CD4-positive, alpha-beta T cell (primary cell): ENCODE measurements at regions of chr14 and their contacts with region 1.

Region 1: GRCh38 chr14:77108746-77109145 is 10.7 kb downstream of the CIPC start:
- DNase-seq: no peak
- ATAC-seq: no peak
- H3K4me3 ChIP-seq: no peak overlapping the region
- H3K4me3 Mint-ChIP-seq: no peak overlapping the region
- H3K27ac ChIP-seq: no peak overlapping the region
- H3K27ac Mint-ChIP-seq: no peak overlapping the region
- H3K4me1 ChIP-seq: no peaks in the 10 kb centered on the region
- H3K4me1 Mint-ChIP-seq: no peaks in the 10 kb centered on the region
- H3K27me3 ChIP-seq: no peaks in the 10 kb centered on the region
- H3K27me3 Mint-ChIP-seq: no peaks in the 10 kb centered on the region
- CTCF ChIP-seq: no peak

Region 2: DNA sequence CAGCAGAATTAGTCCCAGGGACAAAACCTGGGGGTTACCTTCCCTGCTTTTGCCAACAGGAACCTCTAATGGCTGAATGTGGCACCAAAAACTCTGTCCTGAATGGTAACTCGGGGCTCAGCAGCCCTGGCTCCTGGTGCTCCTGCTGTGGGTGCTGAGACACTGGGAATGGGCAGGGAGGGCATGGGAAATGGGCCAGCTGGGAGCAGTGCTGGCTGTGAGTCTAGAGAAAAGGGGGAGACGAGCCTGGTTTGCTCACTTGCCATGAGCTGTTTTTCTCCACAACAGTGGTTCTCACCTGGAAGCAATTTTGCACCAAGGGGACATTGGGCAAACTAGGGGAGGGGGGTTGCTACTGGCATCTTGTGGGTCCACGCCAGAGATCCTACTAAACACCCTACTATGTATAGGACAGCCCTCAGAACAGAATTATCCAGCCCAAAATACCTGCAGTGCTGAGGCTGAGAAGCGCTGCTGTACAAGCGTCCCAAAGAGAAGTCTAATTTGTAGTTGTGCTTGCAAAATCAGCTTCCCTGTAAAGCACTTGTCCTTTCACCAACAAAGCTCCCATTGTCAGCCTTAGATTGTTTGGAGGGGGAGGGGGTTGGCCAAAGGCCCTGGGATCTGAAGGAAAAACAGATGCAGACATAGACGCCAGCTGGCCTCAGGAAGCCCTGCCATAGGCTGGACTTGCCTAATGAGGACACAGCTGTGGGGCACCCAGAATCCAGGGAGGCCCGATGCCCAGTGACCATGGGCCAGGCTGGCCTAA is 278.9 kb before region 1 on chr14:
- CTCF ChIA-PET with region 1: no interaction called
- POLR2A ChIA-PET with region 1: no interaction called
- intact Hi-C with region 1: no loop called
- DNase-seq: no peak
- ATAC-seq: no peak
- H3K4me3 ChIP-seq: no peak overlapping the region
- H3K4me3 Mint-ChIP-seq: no peak overlapping the region
- H3K27ac ChIP-seq: no peak overlapping the region
- H3K27ac Mint-ChIP-seq: no peak overlapping the region
- H3K4me1 ChIP-seq: no peaks in the 10 kb centered on the region
- H3K4me1 Mint-ChIP-seq: no peaks in the 10 kb centered on the region
- H3K27me3 ChIP-seq: peaks cover 0 to 3% of the 10 kb centered on the region in 2 experiments
- H3K27me3 Mint-ChIP-seq: peaks cover 12% of the 10 kb centered on the region
- CTCF ChIP-seq: no peak

Region 3: GRCh38 chr14:77086017-77086736 is 22.6 kb before region 1 on chr14:
- CTCF ChIA-PET with region 1: no interaction called
- POLR2A ChIA-PET with region 1: no interaction called
- intact Hi-C with region 1: no loop called
- DNase-seq: peak in 4 of 14 experiments; percentile 27 to 75 (median 46)
- ATAC-seq: peak; percentile 88
- H3K4me3 ChIP-seq: no peak overlapping the region
- H3K4me3 Mint-ChIP-seq: no peak overlapping the region
- H3K27ac ChIP-seq: no peak overlapping the region
- H3K27ac Mint-ChIP-seq: peak overlapping the region; percentile 46
- H3K4me1 ChIP-seq: peaks cover 10% of the 10 kb centered on the region
- H3K4me1 Mint-ChIP-seq: peaks cover 19% of the 10 kb centered on the region
- H3K27me3 ChIP-seq: no peaks in the 10 kb centered on the region
- H3K27me3 Mint-ChIP-seq: no peaks in the 10 kb centered on the region
- CTCF ChIP-seq: no peak

Region 4: GRCh38 chr14:77124345-77125280 is 15.9 kb after region 1 on chr14:
- CTCF ChIA-PET with region 1: interaction called, 4 read pairs
- POLR2A ChIA-PET with region 1: interaction called, 12 read pairs
- intact Hi-C with region 1: loop called in 1 of 2 experiments (anchors 1 kb)
- DNase-seq: peak; percentile 40 to 90 (median 60)
- ATAC-seq: peak; percentile 74
- H3K4me3 ChIP-seq: peak overlapping the region; percentile 82
- H3K4me3 Mint-ChIP-seq: peak overlapping the region; percentile 79
- H3K27ac ChIP-seq: peak overlapping the region in 1 of 2 donors; percentile 37
- H3K27ac Mint-ChIP-seq: peak overlapping the region; percentile 93
- H3K4me1 ChIP-seq: peaks cover 60% of the 10 kb centered on the region
- H3K4me1 Mint-ChIP-seq: peaks cover 58% of the 10 kb centered on the region
- H3K27me3 ChIP-seq: peaks cover 11 to 21% of the 10 kb centered on the region in 2 experiments
- H3K27me3 Mint-ChIP-seq: peaks cover 42% of the 10 kb centered on the region
- CTCF ChIP-seq: peak; percentile 50

Region 5: GRCh38 chr14:77219591-77219990 is 110.8 kb after region 1 on chr14:
- CTCF ChIA-PET with region 1: no interaction called
- POLR2A ChIA-PET with region 1: no interaction called
- intact Hi-C with region 1: no loop called
- DNase-seq: no peak
- ATAC-seq: no peak
- H3K4me3 ChIP-seq: no peak overlapping the region
- H3K4me3 Mint-ChIP-seq: no peak overlapping the region
- H3K27ac ChIP-seq: no peak overlapping the region
- H3K27ac Mint-ChIP-seq: no peak overlapping the region
- H3K4me1 ChIP-seq: no peaks in the 10 kb centered on the region
- H3K4me1 Mint-ChIP-seq: no peaks in the 10 kb centered on the region
- H3K27me3 ChIP-seq: peaks cover 0 to 7% of the 10 kb centered on the region in 2 experiments
- H3K27me3 Mint-ChIP-seq: peaks cover 11% of the 10 kb centered on the region
- CTCF ChIP-seq: no peak